H1 (cell line): ENCODE measurements at regions of chr16 and their contacts with region 1.

Region 1: GRCh38 chr16:309476-309875 is 26.5 kb downstream of the PDIA2 start:
- DNase-seq: no peak
- H3K4me3 ChIP-seq: no peak overlapping the region
- H3K27ac ChIP-seq: no peak overlapping the region
- H3K4me1 ChIP-seq: no peaks in the 10 kb centered on the region
- H3K27me3 ChIP-seq: no peaks in the 10 kb centered on the region
- CTCF ChIP-seq: peak in 1 of 3 experiments; percentile 19; a peak in 1 of 4 replicates
- EP300 ChIP-seq: no peak
- POLR2A ChIP-seq: no peak
- RAD21 ChIP-seq: peak; percentile 28 to 35

Region 2: DNA sequence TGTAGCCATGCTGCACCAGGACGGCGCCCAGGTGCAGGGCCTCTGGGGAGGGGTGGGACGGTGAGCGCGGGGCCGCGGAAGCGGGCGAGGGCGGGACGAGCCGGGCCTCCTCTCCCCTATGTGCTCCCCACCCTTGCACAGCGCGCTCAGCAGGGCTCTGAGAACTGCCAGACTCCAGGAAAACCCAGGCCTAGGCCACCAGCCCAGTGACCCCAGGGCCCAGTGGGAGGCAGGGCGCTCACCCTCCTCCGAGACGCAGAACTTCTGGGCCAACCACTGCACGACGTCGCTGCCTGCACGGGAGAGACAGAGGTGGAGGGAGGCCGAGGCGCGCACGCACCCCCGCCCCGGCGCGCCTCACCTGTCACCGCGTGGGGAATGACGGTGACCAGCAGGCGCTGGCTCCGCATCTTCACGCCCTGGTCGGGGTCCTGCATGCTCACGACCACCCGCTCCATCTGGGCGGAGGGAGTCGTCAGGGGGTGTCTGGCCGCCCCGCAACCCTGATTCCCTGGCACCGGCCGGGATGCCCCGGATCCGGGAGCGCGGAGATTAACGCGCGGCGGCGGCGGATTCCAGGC is 34.3 kb before region 1 on chr16:
- CTCF ChIA-PET with region 1: no interaction called
- POLR2A ChIA-PET with region 1: no interaction called
- DNase-seq: no peak
- H3K4me3 ChIP-seq: peak overlapping the region; percentile 30 to 65 (median 49)
- H3K27ac ChIP-seq: no peak overlapping the region
- H3K4me1 ChIP-seq: peaks cover 0 to 6% (median 4%) of the 10 kb centered on the region in 4 experiments; a peak in 5 of 7 replicates
- H3K27me3 ChIP-seq: peaks cover 11 to 39% (median 35%) of the 10 kb centered on the region in 4 experiments
- CTCF ChIP-seq: no peak
- EP300 ChIP-seq: no peak
- POLR2A ChIP-seq: no peak
- RAD21 ChIP-seq: no peak

Region 3: DNA sequence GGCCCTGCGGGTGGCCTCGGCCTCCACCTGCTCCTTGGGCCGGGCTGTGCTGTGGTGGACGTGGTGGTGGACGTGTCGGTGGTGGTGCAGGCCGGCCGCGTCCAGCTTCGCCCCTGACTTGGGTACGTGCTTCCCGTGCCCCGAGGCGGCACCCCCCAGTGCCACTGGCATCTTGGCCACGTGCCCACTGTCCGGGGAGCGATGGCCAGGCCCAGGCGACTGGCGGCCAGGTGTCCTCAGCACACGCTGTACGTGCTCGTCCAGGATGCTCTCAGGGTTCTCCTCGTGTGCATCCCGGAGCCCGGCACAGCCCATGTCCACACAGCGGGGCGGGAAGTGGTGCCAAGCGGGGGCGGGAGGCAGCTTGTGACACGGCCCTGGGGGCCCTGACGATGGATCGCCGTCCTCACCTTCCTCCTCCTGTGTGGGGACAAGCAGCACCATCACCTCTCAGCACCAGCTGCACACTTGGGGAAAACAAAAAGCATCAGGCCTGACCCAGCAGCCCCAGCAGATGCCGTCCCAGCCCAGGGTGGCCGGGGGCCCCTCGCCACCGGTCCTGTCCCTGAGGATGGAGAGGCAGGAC is 11.6 kb before region 1 on chr16:
- CTCF ChIA-PET with region 1: interaction called, 10 read pairs
- POLR2A ChIA-PET with region 1: no interaction called
- DNase-seq: no peak
- H3K4me3 ChIP-seq: no peak overlapping the region
- H3K27ac ChIP-seq: no peak overlapping the region
- H3K4me1 ChIP-seq: no peaks in the 10 kb centered on the region
- H3K27me3 ChIP-seq: no peaks in the 10 kb centered on the region
- CTCF ChIP-seq: no peak
- EP300 ChIP-seq: no peak
- POLR2A ChIP-seq: no peak
- RAD21 ChIP-seq: no peak